ENCODE measurements at regions of chr2 and their contacts with region 1.

Region 1: DNA sequence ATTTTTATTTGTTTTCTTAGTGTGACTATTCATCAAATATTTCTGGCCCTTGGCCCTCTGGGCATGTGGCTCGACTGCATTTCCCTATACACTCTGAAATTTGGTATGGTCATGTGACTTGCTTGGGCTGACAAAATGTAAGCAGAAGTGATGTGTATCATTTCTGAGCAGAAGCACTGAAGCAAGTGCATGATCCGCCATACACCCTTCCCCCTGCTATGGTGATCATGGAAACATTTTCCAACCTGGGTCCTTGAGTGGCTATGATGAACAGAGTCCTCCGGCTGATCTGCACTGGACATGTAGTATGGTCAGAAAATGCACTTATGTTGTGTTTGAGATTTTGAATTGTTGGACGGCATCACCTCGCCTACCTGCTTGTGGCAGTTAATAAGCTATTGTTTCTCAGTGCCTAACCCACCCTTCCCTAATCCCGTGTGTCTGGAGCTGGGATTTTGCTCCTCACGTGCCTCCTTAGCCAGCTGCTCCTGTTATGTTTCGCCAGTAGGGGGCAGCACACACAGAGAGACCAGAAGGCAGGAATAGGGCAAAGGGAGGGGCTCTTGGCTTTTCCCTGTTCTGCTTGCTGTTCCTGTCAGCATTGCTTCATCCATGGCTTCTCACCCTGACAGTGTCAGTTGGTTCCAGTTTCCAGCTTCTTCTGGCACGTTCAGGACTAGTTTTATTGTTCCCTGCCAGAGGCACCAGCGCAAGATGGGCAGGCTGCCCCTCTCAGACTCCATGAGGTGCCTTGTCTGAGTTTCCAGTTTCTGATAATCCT is 207.3 kb downstream of the ARL6IP6 start:
- DNase-seq: peak in 2 of 5 donors; percentile 18 to 30
- ATAC-seq: peak in 1 of 4 donors; percentile 49
- H3K4me3 ChIP-seq: no peak overlapping the region
- H3K27ac ChIP-seq: no peak overlapping the region
- H3K4me1 ChIP-seq: no peaks in the 10 kb centered on the region
- H3K27me3 ChIP-seq: peaks cover 0 to 10% (median 0%) of the 10 kb centered on the region in 9 donors
- CTCF ChIP-seq: peak; percentile 19 to 52 (median 36)
- POLR2A ChIP-seq: no peak

Region 2: DNA sequence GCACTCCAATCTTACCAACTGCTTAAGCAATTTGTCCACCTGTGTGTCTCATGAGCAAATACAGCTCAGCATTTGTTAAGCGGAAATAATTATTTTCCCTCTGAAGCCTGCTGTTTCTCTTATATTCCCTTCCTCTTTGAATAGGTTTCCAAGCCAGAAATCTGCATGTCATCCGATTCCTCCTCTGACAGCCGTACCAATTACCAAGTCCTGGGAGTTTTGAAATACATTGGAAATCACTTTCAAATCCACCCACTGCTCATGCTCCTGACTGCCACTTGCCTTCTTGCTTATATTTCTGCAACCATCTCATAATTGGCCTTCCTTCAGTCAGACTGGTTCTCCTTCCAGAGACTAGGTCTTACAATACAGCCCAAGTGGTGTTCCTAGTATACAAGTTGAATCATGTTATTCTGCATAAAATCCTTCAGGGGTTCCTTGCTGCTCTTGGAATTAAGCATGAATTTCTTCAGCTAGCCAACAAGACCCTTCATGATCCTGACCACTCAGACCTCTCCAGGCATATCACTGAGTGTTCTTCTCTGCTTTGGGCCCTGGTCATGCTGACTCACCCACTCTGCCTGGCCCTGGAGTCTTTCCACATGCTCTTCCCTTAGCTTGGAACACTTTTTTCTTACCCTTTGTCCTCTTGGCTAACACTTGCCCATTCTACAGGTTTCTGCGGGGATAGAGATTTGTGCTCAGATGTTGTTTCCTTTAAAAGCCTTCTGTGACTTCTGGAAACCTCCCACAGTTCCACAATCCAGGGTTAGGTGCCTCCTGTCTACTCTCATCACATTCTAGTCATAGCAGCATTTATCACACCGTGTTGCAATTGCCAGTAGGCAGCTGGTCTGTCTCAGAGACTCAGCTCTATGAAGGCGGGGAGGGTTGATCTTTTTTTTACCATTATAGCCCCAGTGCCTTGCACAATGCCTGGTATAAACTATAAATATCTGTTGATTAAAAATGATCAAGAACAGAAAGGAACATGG is 49.7 kb before region 1 on chr2:
- intact Hi-C with region 1: no loop called
- DNase-seq: no peak
- ATAC-seq: no peak
- H3K4me3 ChIP-seq: no peak overlapping the region
- H3K27ac ChIP-seq: no peak overlapping the region
- H3K4me1 ChIP-seq: no peaks in the 10 kb centered on the region
- H3K27me3 ChIP-seq: no peaks in the 10 kb centered on the region
- CTCF ChIP-seq: no peak
- POLR2A ChIP-seq: no peak

Region 3: DNA sequence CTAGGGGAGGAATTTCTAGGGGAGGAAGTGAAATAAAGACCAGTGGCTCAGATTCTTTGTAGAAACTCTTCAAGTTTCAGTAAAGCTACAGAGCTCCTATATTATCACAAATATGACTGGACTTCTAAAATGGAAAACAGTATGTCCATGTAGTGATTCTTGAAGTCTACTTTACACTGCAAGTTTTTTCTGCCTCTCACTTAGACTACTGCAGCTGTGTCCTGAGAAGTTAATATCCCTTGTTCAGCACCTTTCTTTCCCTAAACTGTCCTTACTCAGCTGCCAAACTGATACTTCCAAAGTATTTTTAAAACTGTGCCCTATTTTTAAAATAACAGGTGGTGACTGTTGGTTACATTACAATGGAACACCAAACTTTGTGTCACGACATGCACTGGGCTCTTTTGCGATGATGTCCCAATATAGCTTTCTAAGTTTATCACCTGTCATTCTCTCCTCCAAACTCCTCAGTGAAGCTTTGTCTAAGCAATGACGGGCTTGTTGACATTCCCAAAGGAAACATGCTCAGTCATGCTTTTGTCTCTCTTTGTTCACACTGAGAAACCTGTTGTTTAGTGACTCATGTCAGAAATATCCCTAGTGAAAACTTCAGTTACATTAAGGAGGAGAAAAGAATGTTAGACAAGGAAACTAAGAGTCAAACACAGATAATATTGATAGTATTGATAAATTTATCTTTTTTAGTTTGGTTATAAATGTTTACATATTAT is 133.8 kb after region 1 on chr2:
- intact Hi-C with region 1: no loop called
- DNase-seq: no peak
- ATAC-seq: no peak
- H3K4me3 ChIP-seq: no peak overlapping the region
- H3K27ac ChIP-seq: no peak overlapping the region
- H3K4me1 ChIP-seq: no peaks in the 10 kb centered on the region
- H3K27me3 ChIP-seq: no peaks in the 10 kb centered on the region
- CTCF ChIP-seq: no peak
- POLR2A ChIP-seq: no peak

Region 4: GRCh38 chr2:154375579-154375931 is 1449.8 kb after region 1 on chr2:
- intact Hi-C with region 1: loop called in 1 of 10 experiments (anchors 10 kb)
- DNase-seq: no peak
- ATAC-seq: peak in 1 of 4 donors; percentile 43
- H3K4me3 ChIP-seq: peak overlapping the region in 2 of 12 donors; percentile 14 to 19
- H3K27ac ChIP-seq: no peak overlapping the region
- H3K4me1 ChIP-seq: no peaks in the 10 kb centered on the region
- H3K27me3 ChIP-seq: peaks cover 0 to 5% (median 0%) of the 10 kb centered on the region in 9 donors
- CTCF ChIP-seq: peak in 9 of 12 donors; percentile 12 to 50 (median 34)
- POLR2A ChIP-seq: no peak